GM12878 (cell line): ENCODE measurements at regions of chr19 and their contacts with region 1.

Region 1: DNA sequence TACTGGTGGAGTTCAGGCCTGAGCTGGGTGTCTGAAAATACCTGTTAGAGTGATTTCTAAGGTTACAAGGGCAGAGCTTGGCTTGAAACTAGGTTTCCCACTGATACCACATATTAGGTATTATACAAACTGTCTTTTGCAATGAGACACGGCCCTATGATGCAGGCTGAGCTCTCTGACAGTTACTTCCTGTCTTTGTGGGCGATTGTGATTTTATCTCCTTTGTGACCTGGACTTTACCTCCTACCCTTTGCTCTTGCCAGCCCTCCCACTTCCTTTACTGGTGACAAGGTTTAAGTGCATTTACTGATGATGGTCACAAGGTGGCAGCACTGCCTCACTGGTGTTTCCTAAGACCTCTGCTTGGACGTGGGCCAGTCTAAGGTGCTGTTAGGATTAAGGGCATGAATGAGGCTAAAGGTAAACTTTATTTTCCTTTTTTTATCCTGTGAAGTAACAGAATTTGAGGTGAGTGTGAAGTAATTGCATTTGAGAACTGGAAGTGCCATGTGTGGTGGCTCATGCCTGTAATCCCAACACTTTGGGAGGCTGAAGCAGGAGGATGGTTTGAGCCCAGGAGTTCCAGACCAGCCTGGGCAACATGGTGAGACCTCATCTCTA is 7.7 kb upstream of the CXCL17 start:
- DNase-seq: peak; percentile 84
- ATAC-seq: peak; percentile 97
- H3K4me3 ChIP-seq: no peak overlapping the region
- H3K27ac ChIP-seq: no peak overlapping the region
- H3K4me1 ChIP-seq: 0 out of 2 replicates have a peak, but pooled peaks cover 3% of the 10 kb centered on the region
- H3K27me3 ChIP-seq: no peaks in the 10 kb centered on the region
- CTCF ChIP-seq: peak; percentile 78 to 97 (median 91); a peak in 5 of 6 replicates
- EP300 ChIP-seq: no peak
- POLR2A ChIP-seq: no peak
- RAD21 ChIP-seq: peak; percentile 100

Region 2: GRCh38 chr19:42461700-42462324 is 11.4 kb after region 1 on chr19:
- CTCF ChIA-PET with region 1: interaction called, 47 read pairs
- POLR2A ChIA-PET with region 1: interaction called, 6 read pairs
- RAD21 ChIA-PET with region 1: interaction called, 50 read pairs
- SMC1A ChIA-PET with region 1: interaction called, 37 read pairs
- in situ Hi-C with region 1: no loop called
- intact Hi-C with region 1: no loop called
- DNase-seq: no peak
- ATAC-seq: no peak
- H3K4me3 ChIP-seq: no peak overlapping the region
- H3K27ac ChIP-seq: no peak overlapping the region
- H3K4me1 ChIP-seq: peaks cover 22% of the 10 kb centered on the region
- H3K27me3 ChIP-seq: no peaks in the 10 kb centered on the region
- CTCF ChIP-seq: no peak
- EP300 ChIP-seq: no peak
- POLR2A ChIP-seq: no peak
- RAD21 ChIP-seq: no peak

Region 3: DNA sequence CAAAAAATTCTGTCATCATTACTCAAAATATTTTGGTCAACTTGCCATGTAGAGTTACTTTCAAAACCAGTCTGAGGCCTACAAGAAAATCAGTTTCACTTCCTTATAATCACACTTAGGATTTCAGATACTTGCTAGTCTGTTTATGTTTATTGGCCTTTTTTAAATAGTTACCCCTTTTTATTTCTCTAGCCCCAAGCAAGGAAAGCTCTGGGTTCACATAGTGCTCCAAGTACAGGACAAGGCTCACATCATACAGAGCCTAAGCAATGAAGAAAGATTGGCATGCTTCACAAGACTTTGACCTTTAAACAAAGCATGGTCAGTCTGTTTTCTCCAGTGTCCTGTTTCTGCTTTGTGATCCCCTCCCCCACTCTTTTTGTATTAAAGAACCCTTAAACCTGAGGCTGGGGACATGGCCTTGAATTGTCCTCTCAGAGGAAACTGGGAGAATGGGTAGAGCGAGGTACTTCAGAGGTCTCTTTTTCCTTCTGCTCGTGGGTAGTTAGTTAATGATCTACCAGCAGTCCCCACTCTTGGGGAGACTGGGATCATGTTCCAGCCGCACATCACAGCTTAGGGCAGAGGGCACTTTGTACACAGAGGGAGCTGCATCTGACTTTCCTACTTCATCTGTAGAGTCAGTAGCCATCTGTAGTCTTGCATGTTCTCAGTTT is 47.2 kb after region 1 on chr19:
- CTCF ChIA-PET with region 1: interaction called, 16 read pairs
- POLR2A ChIA-PET with region 1: interaction called, 4 read pairs
- RAD21 ChIA-PET with region 1: interaction called, 12 read pairs
- SMC1A ChIA-PET with region 1: interaction called, 40 read pairs
- in situ Hi-C with region 1: no loop called
- intact Hi-C with region 1: no loop called
- DNase-seq: peak; percentile 60
- ATAC-seq: peak; percentile 86
- H3K4me3 ChIP-seq: peak overlapping the region; percentile 9; the same call in 1 of the 2 replicates
- H3K27ac ChIP-seq: peak overlapping the region; percentile 80
- H3K4me1 ChIP-seq: peaks cover 28% of the 10 kb centered on the region
- H3K27me3 ChIP-seq: no peaks in the 10 kb centered on the region
- CTCF ChIP-seq: no peak
- EP300 ChIP-seq: peak; percentile 66 to 78; a peak in 3 of 4 replicates
- POLR2A ChIP-seq: no peak
- RAD21 ChIP-seq: 0 out of 2 replicates have a peak, but pooled peaks have one; percentile 8

Region 4: GRCh38 chr19:42529248-42529764 is 78.9 kb after region 1 on chr19:
- CTCF ChIA-PET with region 1: interaction called, 250 read pairs
- POLR2A ChIA-PET with region 1: interaction called, 14 read pairs
- RAD21 ChIA-PET with region 1: interaction called, 177 read pairs
- SMC1A ChIA-PET with region 1: interaction called, 193 read pairs
- in situ Hi-C with region 1: loop called (anchors 5 kb)
- intact Hi-C with region 1: loop called (anchors 1 kb)
- DNase-seq: no peak
- ATAC-seq: peak; percentile 94
- H3K4me3 ChIP-seq: peak overlapping the region; percentile 20; the same call in 1 of the 2 replicates
- H3K27ac ChIP-seq: peak overlapping the region; percentile 74
- H3K4me1 ChIP-seq: peaks cover 15% of the 10 kb centered on the region
- H3K27me3 ChIP-seq: no peaks in the 10 kb centered on the region
- CTCF ChIP-seq: peak; percentile 97 to 98 (median 97); a peak in 5 of 6 replicates
- EP300 ChIP-seq: no peak
- POLR2A ChIP-seq: 0 out of 2 replicates have a peak, but pooled peaks have one; percentile 25
- RAD21 ChIP-seq: peak; percentile 98

Region 5: GRCh38 chr19:42563352-42564210 is 113.2 kb after region 1 on chr19:
- CTCF ChIA-PET with region 1: interaction called, 16 read pairs
- POLR2A ChIA-PET with region 1: no interaction called
- RAD21 ChIA-PET with region 1: interaction called, 10 read pairs
- SMC1A ChIA-PET with region 1: interaction called, 9 read pairs
- in situ Hi-C with region 1: no loop called
- intact Hi-C with region 1: no loop called
- DNase-seq: no peak
- ATAC-seq: peak; percentile 94
- H3K4me3 ChIP-seq: no peak overlapping the region
- H3K27ac ChIP-seq: no peak overlapping the region
- H3K4me1 ChIP-seq: no peaks in the 10 kb centered on the region
- H3K27me3 ChIP-seq: no peaks in the 10 kb centered on the region
- CTCF ChIP-seq: peak; percentile 67 to 78 (median 71)
- EP300 ChIP-seq: no peak
- POLR2A ChIP-seq: no peak
- RAD21 ChIP-seq: peak; percentile 58